CD8-positive, alpha-beta T cell (primary cell): ENCODE measurements at regions of chr5 and their contacts with region 1.

Region 1: GRCh38 chr5:172714491-172715421 is 56.2 kb downstream of the DUSP1 start:
- DNase-seq: peak; percentile 43 to 82 (median 73)
- ATAC-seq: peak; percentile 79
- H3K4me3 ChIP-seq: no peak overlapping the region
- H3K4me3 Mint-ChIP-seq: no peak overlapping the region
- H3K27ac ChIP-seq: no peak overlapping the region
- H3K27ac Mint-ChIP-seq: no peak overlapping the region
- H3K4me1 ChIP-seq: peaks cover 13% of the 10 kb centered on the region
- H3K4me1 Mint-ChIP-seq: peaks cover 13% of the 10 kb centered on the region
- H3K27me3 ChIP-seq: peaks cover 0 to 6% of the 10 kb centered on the region in 2 experiments
- H3K27me3 Mint-ChIP-seq: peaks cover 10% of the 10 kb centered on the region
- CTCF ChIP-seq: peak; percentile 82

Region 2: GRCh38 chr5:172727551-172727950 is 12.8 kb after region 1 on chr5:
- CTCF ChIA-PET with region 1: interaction called, 12 read pairs
- POLR2A ChIA-PET with region 1: no interaction called
- intact Hi-C with region 1: no loop called
- DNase-seq: no peak
- ATAC-seq: no peak
- H3K4me3 ChIP-seq: no peak overlapping the region
- H3K4me3 Mint-ChIP-seq: no peak overlapping the region
- H3K27ac ChIP-seq: no peak overlapping the region
- H3K27ac Mint-ChIP-seq: no peak overlapping the region
- H3K4me1 ChIP-seq: no peaks in the 10 kb centered on the region
- H3K4me1 Mint-ChIP-seq: peaks cover 4% of the 10 kb centered on the region
- H3K27me3 ChIP-seq: no peaks in the 10 kb centered on the region
- H3K27me3 Mint-ChIP-seq: no peaks in the 10 kb centered on the region
- CTCF ChIP-seq: no peak

Region 3: DNA sequence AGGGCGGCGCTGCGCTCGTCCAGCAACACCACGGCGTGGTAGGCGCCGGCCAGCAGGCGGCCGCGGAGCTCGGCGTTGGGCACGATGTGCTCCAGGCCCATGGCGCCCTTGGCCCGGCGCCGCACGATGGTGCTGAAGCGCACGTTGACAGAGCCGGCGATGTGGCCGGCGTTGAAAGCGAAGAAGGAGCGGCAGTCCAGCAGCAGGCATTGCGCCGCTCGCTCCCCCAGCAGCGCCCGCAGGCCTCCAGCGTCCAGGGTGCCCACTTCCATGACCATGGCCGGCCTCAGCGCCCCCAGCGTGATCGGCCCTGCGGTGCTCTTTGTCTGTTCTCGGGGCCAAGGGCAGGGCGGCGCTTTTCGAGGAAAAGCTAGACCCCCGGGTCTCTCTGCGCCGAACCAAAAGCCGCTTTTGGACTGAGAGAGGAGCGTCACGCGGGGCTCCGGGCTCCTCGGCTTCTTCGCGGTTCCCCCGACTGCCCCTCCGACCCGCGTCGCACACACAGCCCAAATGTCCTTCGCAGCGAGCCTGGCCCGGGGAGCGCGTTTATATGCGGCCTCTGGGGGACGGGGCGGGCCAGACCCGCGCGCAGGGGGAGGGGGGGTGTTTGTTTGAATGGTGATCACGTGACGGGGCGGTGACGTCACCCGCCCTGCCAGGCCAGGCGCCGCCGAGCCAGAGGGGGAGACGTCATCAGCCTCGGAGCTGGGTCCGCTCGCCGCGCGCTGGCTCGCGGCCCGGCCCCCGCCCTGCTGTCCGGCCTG is 56.1 kb after region 1 on chr5 and contains the start of gene DUSP1:
- CTCF ChIA-PET with region 1: interaction called, 70 read pairs
- POLR2A ChIA-PET with region 1: interaction called, 26 read pairs
- intact Hi-C with region 1: loop called (anchors 1 kb)
- DNase-seq: peak; percentile 97 to 99 (median 98)
- ATAC-seq: peak; percentile 54
- H3K4me3 ChIP-seq: peak within 1 kb of the TSS; percentile 85 to 89
- H3K4me3 Mint-ChIP-seq: peak within 1 kb of the TSS; percentile 95
- H3K27ac ChIP-seq: peak within 1 kb of the TSS; percentile 99 to 100
- H3K27ac Mint-ChIP-seq: peak within 1 kb of the TSS; percentile 98
- H3K4me1 ChIP-seq: peaks cover 36% of the 10 kb centered on the region
- H3K4me1 Mint-ChIP-seq: peaks cover 58% of the 10 kb centered on the region
- H3K27me3 ChIP-seq: no peaks in the 10 kb centered on the region
- H3K27me3 Mint-ChIP-seq: no peaks in the 10 kb centered on the region
- CTCF ChIP-seq: no peak
- total RNA-seq, gene DUSP1: 745 to 767 TPM

Region 4: GRCh38 chr5:172920447-172920849 is 205.7 kb after region 1 on chr5:
- CTCF ChIA-PET with region 1: interaction called, 436 read pairs
- POLR2A ChIA-PET with region 1: no interaction called
- intact Hi-C with region 1: no loop called
- DNase-seq: no peak
- ATAC-seq: no peak
- H3K4me3 ChIP-seq: no peak overlapping the region
- H3K4me3 Mint-ChIP-seq: no peak overlapping the region
- H3K27ac ChIP-seq: no peak overlapping the region
- H3K27ac Mint-ChIP-seq: peak overlapping the region; percentile 100
- H3K4me1 ChIP-seq: peaks cover 26% of the 10 kb centered on the region
- H3K4me1 Mint-ChIP-seq: peaks cover 27% of the 10 kb centered on the region
- H3K27me3 ChIP-seq: no peaks in the 10 kb centered on the region
- H3K27me3 Mint-ChIP-seq: no peaks in the 10 kb centered on the region
- CTCF ChIP-seq: no peak

Region 5: GRCh38 chr5:172951791-172952511 is 237.2 kb after region 1 on chr5:
- CTCF ChIA-PET with region 1: interaction called, 36 read pairs
- POLR2A ChIA-PET with region 1: no interaction called
- intact Hi-C with region 1: no loop called
- DNase-seq: no peak
- ATAC-seq: no peak
- H3K4me3 ChIP-seq: no peak overlapping the region
- H3K4me3 Mint-ChIP-seq: no peak overlapping the region
- H3K27ac ChIP-seq: no peak overlapping the region
- H3K27ac Mint-ChIP-seq: no peak overlapping the region
- H3K4me1 ChIP-seq: no peaks in the 10 kb centered on the region
- H3K4me1 Mint-ChIP-seq: peaks cover 7% of the 10 kb centered on the region
- H3K27me3 ChIP-seq: no peaks in the 10 kb centered on the region
- H3K27me3 Mint-ChIP-seq: no peaks in the 10 kb centered on the region
- CTCF ChIP-seq: no peak

Region 6: GRCh38 chr5:173204185-173204979 is 489.6 kb after region 1 on chr5:
- CTCF ChIA-PET with region 1: no interaction called
- POLR2A ChIA-PET with region 1: no interaction called
- intact Hi-C with region 1: loop called (anchors 2 to 10 kb)
- DNase-seq: peak in 2 of 9 experiments; percentile 43 to 56
- ATAC-seq: no peak
- H3K4me3 ChIP-seq: no peak overlapping the region
- H3K4me3 Mint-ChIP-seq: no peak overlapping the region
- H3K27ac ChIP-seq: no peak overlapping the region
- H3K27ac Mint-ChIP-seq: no peak overlapping the region
- H3K4me1 ChIP-seq: no peaks in the 10 kb centered on the region
- H3K4me1 Mint-ChIP-seq: no peaks in the 10 kb centered on the region
- H3K27me3 ChIP-seq: peaks cover 0 to 4% of the 10 kb centered on the region in 2 experiments
- H3K27me3 Mint-ChIP-seq: peaks cover 49% of the 10 kb centered on the region
- CTCF ChIP-seq: peak; percentile 56